GM12878 (cell line): ENCODE measurements at regions of chr11 and their contacts with region 1.

Region 1: GRCh38 chr11:67613960-67614715 is 7.4 kb downstream of the NDUFV1 start:
- DNase-seq: peak; percentile 88
- ATAC-seq: peak; percentile 95
- H3K4me3 ChIP-seq: peak overlapping the region; percentile 46; the same call in 1 of the 2 replicates
- H3K27ac ChIP-seq: peak overlapping the region; percentile 97
- H3K4me1 ChIP-seq: peaks cover 22% of the 10 kb centered on the region
- H3K27me3 ChIP-seq: no peaks in the 10 kb centered on the region
- CTCF ChIP-seq: peak; percentile 34 to 72 (median 42)
- EP300 ChIP-seq: no peak; a peak in 1 of 4 replicates
- POLR2A ChIP-seq: peak; percentile 92
- RAD21 ChIP-seq: no peak

Region 2: DNA sequence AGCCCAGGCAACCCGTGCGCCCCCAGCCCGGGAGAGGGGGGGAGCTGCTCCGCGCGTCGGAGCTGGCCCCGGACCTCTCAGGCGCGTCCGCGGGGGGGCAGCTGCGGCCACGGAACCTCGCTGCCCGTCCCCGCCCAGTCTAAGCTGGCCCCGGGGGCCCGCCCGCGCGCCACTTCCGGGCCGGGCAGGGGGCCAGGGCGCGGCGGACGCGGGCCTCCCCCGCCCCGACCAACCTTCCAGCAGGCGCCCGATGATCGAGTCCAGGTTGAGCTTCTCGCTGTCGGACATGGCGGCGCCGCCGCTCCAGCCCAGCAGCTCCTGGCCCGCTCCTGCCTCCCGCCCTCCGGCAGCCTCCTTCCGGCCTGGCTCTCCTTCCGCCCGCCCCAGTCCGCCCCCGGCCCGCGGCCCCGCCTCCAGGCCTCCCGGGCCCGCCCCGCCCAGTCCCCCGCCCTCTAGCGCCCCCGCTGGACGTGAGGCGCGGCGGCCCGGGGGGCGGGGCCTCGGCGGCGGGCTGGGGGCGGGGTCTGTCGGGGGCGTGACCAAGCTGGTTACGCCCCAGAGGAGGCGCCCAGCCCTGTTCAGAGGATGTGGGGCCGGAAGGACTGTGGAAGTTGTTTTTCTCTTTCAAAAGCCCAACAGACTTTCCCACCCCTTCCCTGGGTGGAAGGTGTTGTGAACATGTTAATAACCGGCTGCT is 212.5 kb before region 1 on chr11 and contains the start of gene PPP1CA:
- CTCF ChIA-PET with region 1: no interaction called
- POLR2A ChIA-PET with region 1: no interaction called
- RAD21 ChIA-PET with region 1: no interaction called
- SMC1A ChIA-PET with region 1: no interaction called
- in situ Hi-C with region 1: no loop called
- intact Hi-C with region 1: no loop called
- DNase-seq: no peak
- ATAC-seq: peak; percentile 77
- H3K4me3 ChIP-seq: peak within 1 kb of the TSS; percentile 80
- H3K27ac ChIP-seq: peak within 1 kb of the TSS; percentile 99
- H3K4me1 ChIP-seq: peaks cover 50% of the 10 kb centered on the region
- H3K27me3 ChIP-seq: no peaks in the 10 kb centered on the region
- CTCF ChIP-seq: peak in 2 of 3 experiments; percentile 36 to 41; a peak in 3 of 6 replicates
- EP300 ChIP-seq: no peak
- POLR2A ChIP-seq: peak; percentile 96
- RAD21 ChIP-seq: peak; percentile 31; the same call in 1 of the 2 replicates
- polyA plus RNA-seq, gene PPP1CA: 26.4 to 41.7 TPM

Region 3: GRCh38 chr11:67551127-67551526 is 63.0 kb before region 1 on chr11:
- CTCF ChIA-PET with region 1: no interaction called
- POLR2A ChIA-PET with region 1: no interaction called
- RAD21 ChIA-PET with region 1: no interaction called
- SMC1A ChIA-PET with region 1: no interaction called
- in situ Hi-C with region 1: no loop called
- intact Hi-C with region 1: no loop called
- DNase-seq: no peak
- ATAC-seq: no peak
- H3K4me3 ChIP-seq: no peak overlapping the region
- H3K27ac ChIP-seq: no peak overlapping the region
- H3K4me1 ChIP-seq: no peaks in the 10 kb centered on the region
- H3K27me3 ChIP-seq: no peaks in the 10 kb centered on the region
- CTCF ChIP-seq: no peak
- EP300 ChIP-seq: no peak
- POLR2A ChIP-seq: no peak
- RAD21 ChIP-seq: no peak

Region 4: GRCh38 chr11:67572747-67573419 is 41.3 kb before region 1 on chr11:
- CTCF ChIA-PET with region 1: interaction called, 20 read pairs
- POLR2A ChIA-PET with region 1: no interaction called
- RAD21 ChIA-PET with region 1: interaction called, 3 read pairs
- SMC1A ChIA-PET with region 1: interaction called, 3 read pairs
- in situ Hi-C with region 1: no loop called
- intact Hi-C with region 1: loop called (anchors 5 kb)
- DNase-seq: no peak
- ATAC-seq: peak; percentile 77
- H3K4me3 ChIP-seq: no peak overlapping the region
- H3K27ac ChIP-seq: no peak overlapping the region
- H3K4me1 ChIP-seq: peaks cover 5% of the 10 kb centered on the region
- H3K27me3 ChIP-seq: no peaks in the 10 kb centered on the region; a peak in 1 of 4 replicates
- CTCF ChIP-seq: peak; percentile 56 to 85 (median 62)
- EP300 ChIP-seq: no peak
- POLR2A ChIP-seq: no peak
- RAD21 ChIP-seq: peak; percentile 73

Region 5: GRCh38 chr11:67577941-67578340 is 36.2 kb before region 1 on chr11:
- CTCF ChIA-PET with region 1: interaction called, 54 read pairs
- POLR2A ChIA-PET with region 1: interaction called, 25 read pairs
- RAD21 ChIA-PET with region 1: interaction called, 21 read pairs
- SMC1A ChIA-PET with region 1: interaction called, 15 read pairs
- in situ Hi-C with region 1: no loop called
- intact Hi-C with region 1: loop called (anchors 1 kb)
- DNase-seq: no peak
- ATAC-seq: no peak
- H3K4me3 ChIP-seq: no peak overlapping the region
- H3K27ac ChIP-seq: no peak overlapping the region
- H3K4me1 ChIP-seq: peaks cover 19% of the 10 kb centered on the region
- H3K27me3 ChIP-seq: peaks cover 0 to 1% of the 10 kb centered on the region in 2 experiments; a peak in 2 of 4 replicates
- CTCF ChIP-seq: no peak
- EP300 ChIP-seq: no peak
- POLR2A ChIP-seq: no peak
- RAD21 ChIP-seq: no peak

Region 6: DNA sequence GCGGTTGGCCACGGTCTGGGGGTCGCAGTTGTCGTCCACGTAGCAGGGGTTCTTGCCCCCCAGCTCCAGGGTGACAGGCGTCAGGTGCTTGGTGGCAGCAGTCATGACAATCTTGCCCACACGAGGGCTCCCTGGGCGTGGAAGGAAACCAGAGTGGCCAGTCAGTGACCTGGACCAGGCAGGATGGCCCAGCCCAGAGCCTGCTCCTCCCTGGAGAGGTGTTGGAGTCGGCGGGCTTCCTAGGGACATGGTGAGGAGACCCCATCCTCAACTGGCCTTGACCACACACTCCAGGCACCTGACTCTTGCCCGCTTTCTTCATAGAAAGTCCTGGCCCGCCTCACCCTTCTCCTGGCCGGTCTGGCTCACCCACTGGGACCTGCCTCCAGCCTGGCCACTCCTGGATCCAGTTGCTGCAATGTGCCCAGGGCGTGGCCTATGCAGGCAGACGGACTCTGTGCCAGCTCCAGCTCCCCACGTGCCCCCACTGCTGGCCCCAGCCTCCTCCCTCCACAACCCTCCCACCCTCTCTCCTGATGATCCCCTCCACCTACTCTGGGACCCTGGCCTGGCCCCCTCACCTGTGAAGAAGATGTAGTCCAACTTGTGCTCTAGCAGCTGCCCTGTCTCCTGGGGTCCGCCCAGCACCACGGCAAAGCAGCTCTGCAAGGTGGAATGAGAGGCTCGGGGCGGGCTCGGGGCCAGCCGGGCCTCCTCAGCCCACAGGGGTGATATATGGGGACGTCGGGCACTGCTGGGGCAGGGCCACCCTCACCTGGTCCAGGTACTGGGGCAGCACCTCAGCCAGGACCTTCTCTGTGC is 51.6 kb after region 1 on chr11:
- CTCF ChIA-PET with region 1: no interaction called
- POLR2A ChIA-PET with region 1: no interaction called
- RAD21 ChIA-PET with region 1: no interaction called
- SMC1A ChIA-PET with region 1: no interaction called
- in situ Hi-C with region 1: no loop called
- intact Hi-C with region 1: no loop called
- DNase-seq: no peak
- ATAC-seq: peak; percentile 49; the same call in 2 of the 3 replicates
- H3K4me3 ChIP-seq: no peak overlapping the region
- H3K27ac ChIP-seq: no peak overlapping the region
- H3K4me1 ChIP-seq: peaks cover 9% of the 10 kb centered on the region; the same call in 1 of the 2 replicates
- H3K27me3 ChIP-seq: peaks cover 0 to 2% of the 10 kb centered on the region in 2 experiments; a peak in 2 of 4 replicates
- CTCF ChIP-seq: peak in 1 of 3 experiments; percentile 19; a peak in 2 of 6 replicates
- EP300 ChIP-seq: no peak
- POLR2A ChIP-seq: no peak
- RAD21 ChIP-seq: 0 out of 2 replicates have a peak, but pooled peaks have one; percentile 13